Heart right ventricle (tissue), 16 donors: ENCODE measurements at regions of chr18 and their contacts with region 1.

Region 1: DNA sequence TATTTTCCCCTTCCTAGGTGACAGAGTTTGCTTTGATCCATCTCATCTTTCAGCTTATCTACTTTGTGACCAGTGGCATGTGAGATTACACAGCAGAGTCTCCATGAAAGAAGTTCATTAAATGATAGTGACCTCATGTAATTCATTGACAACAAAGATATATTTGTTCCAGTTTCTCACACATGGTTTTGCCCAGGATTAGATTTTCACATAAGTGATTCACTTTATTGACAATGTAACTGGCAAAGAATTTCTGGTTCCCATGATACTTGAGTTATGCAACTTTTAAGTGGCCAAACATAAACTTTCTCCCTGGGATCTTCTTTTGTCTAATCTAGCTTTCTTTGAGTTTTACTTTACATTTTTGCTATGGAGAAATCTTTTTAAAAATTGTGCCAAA is 50.0 kb downstream of the MC4R start:
- DNase-seq: no peak
- ATAC-seq: no peak
- H3K4me3 ChIP-seq: no peak overlapping the region
- H3K27ac ChIP-seq: no peak overlapping the region
- H3K4me1 ChIP-seq: no peaks in the 10 kb centered on the region
- H3K27me3 ChIP-seq: no peaks in the 10 kb centered on the region
- CTCF ChIP-seq: no peak

Region 2: DNA sequence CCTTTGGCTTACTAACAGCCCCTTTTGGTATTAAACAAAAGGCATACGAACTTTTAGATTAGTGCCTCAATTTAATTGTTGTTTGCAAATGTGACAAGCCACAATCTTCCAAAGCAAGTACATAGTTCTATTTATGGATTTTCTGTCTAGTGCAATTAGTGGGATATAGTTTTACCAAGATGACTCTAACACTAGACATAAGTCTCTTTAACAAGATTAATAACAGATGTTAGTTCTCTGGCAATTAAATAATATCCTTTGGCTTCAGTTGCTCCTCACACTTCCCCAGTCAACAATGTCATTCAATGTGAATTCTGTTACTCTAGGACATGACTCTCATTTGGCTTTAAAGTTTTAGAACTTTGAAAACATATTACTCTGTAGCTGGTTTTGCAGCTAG is 66.7 kb after region 1 on chr18:
- intact Hi-C with region 1: loop called in 1 of 10 experiments (anchors 10 kb)
- DNase-seq: no peak
- ATAC-seq: no peak
- H3K4me3 ChIP-seq: no peak overlapping the region
- H3K27ac ChIP-seq: no peak overlapping the region
- H3K4me1 ChIP-seq: no peaks in the 10 kb centered on the region
- H3K27me3 ChIP-seq: no peaks in the 10 kb centered on the region
- CTCF ChIP-seq: no peak